ENCODE measurements at regions of chr3 and their contacts with region 1.

Region 1: GRCh38 chr3:128170805-128171516 is 17.7 kb downstream of the EEFSEC start:
- DNase-seq: peak; percentile 61 to 78 (median 68)
- ATAC-seq: peak; percentile 99
- H3K4me3 ChIP-seq: no peak overlapping the region
- H3K27ac ChIP-seq: no peak overlapping the region
- H3K4me1 ChIP-seq: peaks cover 0 to 4% of the 10 kb centered on the region in 2 experiments; a peak in 2 of 5 replicates
- H3K27me3 ChIP-seq: no peaks in the 10 kb centered on the region
- CTCF ChIP-seq: peak; percentile 83 to 99 (median 98)
- EP300 ChIP-seq: no peak
- POLR2A ChIP-seq: no peak
- RAD21 ChIP-seq: peak; percentile 73 to 85

Region 2: DNA sequence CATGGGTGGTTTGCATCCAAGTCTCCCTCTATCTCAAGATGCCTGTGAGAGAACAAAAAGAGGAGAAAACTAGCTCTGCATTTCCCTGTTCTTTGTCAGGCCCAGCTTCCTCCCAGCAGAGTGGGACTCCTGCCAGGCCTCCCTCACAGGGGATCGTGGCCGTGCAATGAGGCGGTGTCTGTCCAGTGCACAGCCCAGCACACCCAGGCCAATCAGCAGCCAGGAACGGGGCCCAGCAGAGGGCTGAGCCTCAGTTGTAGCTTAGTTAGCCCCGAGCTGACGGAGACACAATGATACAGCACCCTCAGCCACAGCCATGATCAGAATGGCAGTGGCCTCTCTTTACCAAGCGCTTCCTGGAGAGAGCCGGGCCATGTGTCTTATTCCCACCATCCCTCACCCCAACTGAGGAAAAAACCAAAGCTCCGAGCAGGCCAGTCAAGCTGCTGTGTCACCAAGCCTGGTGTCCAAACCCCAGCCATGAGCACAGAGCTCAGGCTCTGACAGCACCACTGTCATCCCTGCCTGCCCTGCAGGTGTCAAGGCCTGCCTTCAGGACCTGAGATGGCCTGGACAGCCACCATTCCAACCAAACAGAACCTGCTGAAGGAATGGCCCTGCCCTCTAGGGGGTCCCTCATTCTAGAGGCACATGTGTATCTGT is 224.7 kb after region 1 on chr3:
- CTCF ChIA-PET with region 1: no interaction called
- POLR2A ChIA-PET with region 1: no interaction called
- in situ Hi-C with region 1: loop called (anchors 10 kb)
- intact Hi-C with region 1: no loop called
- DNase-seq: peak; percentile 47 to 51 (median 50)
- ATAC-seq: peak; percentile 66
- H3K4me3 ChIP-seq: no peak overlapping the region
- H3K27ac ChIP-seq: 0 out of 3 replicates have a peak overlapping the region, but pooled peaks have one; percentile 24
- H3K4me1 ChIP-seq: peaks cover 13 to 56% of the 10 kb centered on the region in 2 experiments; a peak in 4 of 5 replicates
- H3K27me3 ChIP-seq: no peaks in the 10 kb centered on the region
- CTCF ChIP-seq: no peak
- EP300 ChIP-seq: no peak
- POLR2A ChIP-seq: no peak
- RAD21 ChIP-seq: no peak

Region 3: DNA sequence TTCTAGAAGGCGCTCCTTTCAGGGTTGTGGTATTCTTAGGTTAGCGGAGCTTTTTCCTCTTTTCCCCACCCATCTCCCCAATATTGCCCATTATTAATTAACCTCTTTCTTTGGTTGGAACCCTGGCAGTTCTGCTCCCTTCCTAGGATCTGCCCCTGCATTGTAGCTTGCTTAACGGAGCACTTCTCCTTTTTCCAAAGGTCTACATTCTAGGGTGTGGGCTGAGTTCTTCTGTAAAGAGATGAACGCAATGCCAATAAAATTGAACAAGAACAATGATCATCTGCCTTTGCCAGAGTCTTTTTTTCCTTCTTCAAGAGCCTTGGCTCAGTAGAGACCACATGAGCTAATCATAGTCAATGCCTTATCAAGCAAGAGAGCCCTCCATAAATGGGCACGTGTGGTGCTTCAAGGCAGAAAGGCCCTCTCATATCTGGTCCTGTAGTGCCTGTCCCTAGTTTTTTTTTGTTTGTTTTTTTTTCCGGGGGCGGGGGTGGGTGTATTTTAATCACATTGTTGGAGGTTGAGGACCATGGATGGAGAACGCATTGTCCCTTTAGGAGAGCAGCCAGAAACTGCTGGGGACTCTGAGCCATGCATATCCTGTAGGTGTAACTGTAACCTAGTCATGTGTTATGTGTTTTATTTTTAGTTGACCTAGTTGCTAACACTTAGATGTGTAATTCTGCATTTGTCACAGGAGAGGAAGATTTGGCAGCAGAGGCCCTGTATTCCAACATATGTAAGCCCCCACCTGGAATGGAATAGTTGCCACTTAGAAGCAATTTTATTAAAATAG is 643.8 kb after region 1 on chr3:
- CTCF ChIA-PET with region 1: no interaction called
- POLR2A ChIA-PET with region 1: no interaction called
- in situ Hi-C with region 1: no loop called
- intact Hi-C with region 1: no loop called
- DNase-seq: no peak
- ATAC-seq: no peak
- H3K4me3 ChIP-seq: no peak overlapping the region
- H3K27ac ChIP-seq: no peak overlapping the region
- H3K4me1 ChIP-seq: no peaks in the 10 kb centered on the region
- H3K27me3 ChIP-seq: no peaks in the 10 kb centered on the region
- CTCF ChIP-seq: no peak
- EP300 ChIP-seq: no peak
- POLR2A ChIP-seq: no peak
- RAD21 ChIP-seq: no peak